Ascending aorta (tissue), 2 donors: ENCODE measurements at regions of chrX and their contacts with region 1.

Region 1: DNA sequence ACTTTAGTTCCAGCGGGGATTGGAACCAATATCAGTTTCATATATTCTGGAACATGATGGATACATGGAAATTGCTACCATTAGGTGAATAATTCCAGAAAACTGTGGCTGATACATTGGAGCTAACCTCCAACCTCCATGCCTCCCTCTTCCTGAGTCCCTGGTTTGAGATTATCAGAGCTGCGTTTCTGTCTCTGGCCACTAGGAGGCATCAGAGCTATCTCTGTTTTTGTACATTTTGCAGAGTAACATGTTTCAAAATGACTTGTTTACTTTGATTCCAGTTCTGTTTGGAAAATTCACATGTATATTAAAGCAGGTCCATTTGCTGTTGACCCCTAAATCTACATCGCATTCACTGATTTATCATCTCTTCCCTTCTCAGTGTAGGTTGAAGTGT is 2.4 kb upstream of the RAB40AL start:
- DNase-seq: no peak
- H3K4me3 ChIP-seq: no peak overlapping the region
- H3K27ac ChIP-seq: no peak overlapping the region
- H3K4me1 ChIP-seq: no peaks in the 10 kb centered on the region
- H3K27me3 ChIP-seq: no peaks in the 10 kb centered on the region
- CTCF ChIP-seq: peak in 2 of 3 experiments; percentile 56 to 60

Region 2: DNA sequence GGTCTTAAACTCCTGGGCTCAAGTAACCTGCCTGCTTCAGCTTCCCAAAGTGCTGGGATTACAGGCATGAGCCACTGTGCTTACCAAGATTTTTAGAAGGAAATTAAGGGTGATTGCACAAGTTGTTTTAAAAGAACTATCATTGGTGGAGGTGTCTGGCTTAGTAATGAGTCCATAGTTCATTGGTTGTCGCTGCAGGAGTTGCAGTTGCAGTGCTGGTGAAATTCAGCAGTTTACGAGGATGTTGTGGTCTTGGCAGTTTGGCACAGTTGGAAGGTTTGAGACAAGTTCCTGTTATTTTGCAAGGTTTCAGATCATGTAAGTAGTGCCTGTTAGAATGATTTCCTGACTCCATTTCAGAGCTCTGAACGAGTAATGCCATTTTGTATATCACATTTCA is 50.6 kb after region 1 on chrX:
- intact Hi-C with region 1: loop called (anchors 10 kb)
- DNase-seq: no peak
- H3K4me3 ChIP-seq: no peak overlapping the region
- H3K27ac ChIP-seq: no peak overlapping the region
- H3K4me1 ChIP-seq: no peaks in the 10 kb centered on the region
- H3K27me3 ChIP-seq: no peaks in the 10 kb centered on the region
- CTCF ChIP-seq: no peak

Region 3: GRCh38 chrX:103017542-103017941 is 82.9 kb after region 1 on chrX:
- intact Hi-C with region 1: no loop called
- DNase-seq: no peak
- H3K4me3 ChIP-seq: no peak overlapping the region
- H3K27ac ChIP-seq: no peak overlapping the region
- H3K4me1 ChIP-seq: no peaks in the 10 kb centered on the region
- H3K27me3 ChIP-seq: no peaks in the 10 kb centered on the region
- CTCF ChIP-seq: no peak